Activated CD8-positive, alpha-beta T cell treated with anti-CD3 and anti-CD28 coated beads, Interleukin-2, amount 10 ng/mL, durations not matched to agents 7 days and 5 days (primary cell): ENCODE measurements at regions of chr11 and their contacts with region 1.

Region 1: GRCh38 chr11:35138943-35139721 is at the start of gene CD44:
- DNase-seq: peak; percentile 80
- ATAC-seq: peak; percentile 69
- H3K4me3 Mint-ChIP-seq: peak within 1 kb of the TSS; percentile 88
- H3K27ac Mint-ChIP-seq: peak within 1 kb of the TSS; percentile 92
- H3K4me1 Mint-ChIP-seq: peaks cover 47% of the 10 kb centered on the region
- H3K27me3 Mint-ChIP-seq: no peaks in the 10 kb centered on the region
- total RNA-seq, gene CD44: 398 to 399 TPM

Region 2: GRCh38 chr11:35040221-35040942 is 98.8 kb before region 1 on chr11:
- CTCF ChIA-PET with region 1: interaction called, 7 read pairs
- POLR2A ChIA-PET with region 1: interaction called, 14 read pairs
- DNase-seq: peak; percentile 70
- ATAC-seq: peak; percentile 87
- H3K4me3 Mint-ChIP-seq: peak overlapping the region; percentile 62
- H3K27ac Mint-ChIP-seq: peak overlapping the region; percentile 86
- H3K4me1 Mint-ChIP-seq: peaks cover 50% of the 10 kb centered on the region
- H3K27me3 Mint-ChIP-seq: peaks cover 2% of the 10 kb centered on the region

Region 3: GRCh38 chr11:35082321-35083182 is 56.6 kb before region 1 on chr11:
- CTCF ChIA-PET with region 1: interaction called, 5 read pairs
- POLR2A ChIA-PET with region 1: interaction called, 21 read pairs
- DNase-seq: peak; percentile 94
- ATAC-seq: peak; percentile 82
- H3K4me3 Mint-ChIP-seq: peak overlapping the region; percentile 71
- H3K27ac Mint-ChIP-seq: peak overlapping the region; percentile 87
- H3K4me1 Mint-ChIP-seq: peaks cover 88% of the 10 kb centered on the region
- H3K27me3 Mint-ChIP-seq: peaks cover 2% of the 10 kb centered on the region

Region 4: GRCh38 chr11:35158701-35159510 is 19.8 kb after region 1 on chr11:
- CTCF ChIA-PET with region 1: interaction called, 218 read pairs
- POLR2A ChIA-PET with region 1: interaction called, 10 read pairs
- DNase-seq: no peak
- ATAC-seq: no peak
- H3K4me3 Mint-ChIP-seq: peak overlapping the region; percentile 12
- H3K27ac Mint-ChIP-seq: peak overlapping the region; percentile 58
- H3K4me1 Mint-ChIP-seq: peaks cover 99% of the 10 kb centered on the region
- H3K27me3 Mint-ChIP-seq: no peaks in the 10 kb centered on the region

Region 5: DNA sequence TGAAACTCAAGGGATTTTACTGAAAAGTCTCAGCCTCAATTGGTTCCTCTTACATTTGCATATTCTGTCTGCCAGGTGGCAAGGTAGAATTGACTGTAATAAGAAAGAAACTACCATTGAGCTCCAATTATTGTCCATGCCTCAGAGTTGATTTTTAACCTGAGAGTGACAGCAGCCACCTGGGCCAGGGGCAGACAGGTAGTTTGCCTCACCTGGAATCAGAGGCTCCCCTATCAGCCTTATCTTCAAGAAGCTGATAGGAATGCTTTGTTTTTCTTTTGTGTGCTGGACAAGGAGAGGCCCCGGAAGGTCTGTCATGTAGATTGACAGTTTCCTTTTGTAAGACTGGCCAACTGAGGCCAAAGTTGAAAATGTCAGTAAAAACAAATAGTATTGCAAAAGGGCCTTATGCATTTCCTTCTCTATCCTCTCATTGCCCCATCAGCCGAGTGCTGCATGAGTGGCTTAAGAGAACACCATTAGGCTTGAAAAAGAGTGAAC is 33.9 kb after region 1 on chr11:
- CTCF ChIA-PET with region 1: interaction called, 218 read pairs
- POLR2A ChIA-PET with region 1: interaction called, 47 read pairs
- DNase-seq: no peak
- ATAC-seq: no peak
- H3K4me3 Mint-ChIP-seq: peak overlapping the region; percentile 62
- H3K27ac Mint-ChIP-seq: peak overlapping the region; percentile 87
- H3K4me1 Mint-ChIP-seq: peaks cover 96% of the 10 kb centered on the region
- H3K27me3 Mint-ChIP-seq: no peaks in the 10 kb centered on the region

Region 6: DNA sequence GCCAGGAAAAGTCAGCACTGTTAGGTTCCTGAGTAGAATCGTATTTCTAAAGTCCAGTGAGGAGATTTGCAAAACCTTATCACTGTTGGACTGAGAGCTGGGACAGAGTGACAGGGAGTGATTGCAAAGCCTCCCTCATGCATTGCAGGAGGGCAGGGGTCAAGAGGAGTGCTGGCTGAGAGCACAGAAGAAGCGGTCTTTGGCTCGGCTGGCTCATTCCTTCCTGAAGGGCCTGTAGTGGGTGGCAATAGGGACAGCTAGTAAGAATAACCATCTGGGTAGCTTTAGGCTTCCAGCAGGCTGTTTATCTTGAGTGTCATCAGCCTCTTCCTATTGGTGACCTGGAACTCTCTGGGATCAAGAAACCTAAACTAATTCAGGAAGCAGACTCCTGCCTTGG is 53.2 kb after region 1 on chr11:
- CTCF ChIA-PET with region 1: no interaction called
- POLR2A ChIA-PET with region 1: no interaction called
- DNase-seq: no peak
- ATAC-seq: peak; percentile 25
- H3K4me3 Mint-ChIP-seq: no peak overlapping the region
- H3K27ac Mint-ChIP-seq: no peak overlapping the region
- H3K4me1 Mint-ChIP-seq: peaks cover 39% of the 10 kb centered on the region
- H3K27me3 Mint-ChIP-seq: no peaks in the 10 kb centered on the region

Region 7: DNA sequence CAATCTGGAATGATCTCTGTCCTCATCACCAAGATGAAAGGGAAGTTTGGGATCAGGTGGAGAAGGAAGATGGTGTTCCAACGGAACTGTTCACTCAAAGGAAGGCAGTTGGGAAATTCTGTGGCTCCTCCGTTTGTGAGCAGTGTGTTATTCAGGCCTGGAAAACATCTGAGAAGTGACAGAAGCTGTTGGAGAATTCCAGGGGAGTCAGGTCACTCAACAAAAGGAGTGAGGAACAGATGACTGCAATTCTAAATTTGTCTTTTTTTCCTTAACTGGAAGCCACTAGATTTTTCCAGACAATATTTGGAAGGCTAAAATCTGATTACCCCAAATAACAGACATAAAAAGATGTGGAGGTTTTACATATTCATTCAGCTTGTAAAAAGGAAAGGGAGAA is 107.6 kb after region 1 on chr11:
- CTCF ChIA-PET with region 1: interaction called, 11 read pairs
- POLR2A ChIA-PET with region 1: no interaction called
- DNase-seq: no peak
- ATAC-seq: no peak
- H3K4me3 Mint-ChIP-seq: no peak overlapping the region
- H3K27ac Mint-ChIP-seq: peak overlapping the region; percentile 28
- H3K4me1 Mint-ChIP-seq: peaks cover 65% of the 10 kb centered on the region
- H3K27me3 Mint-ChIP-seq: no peaks in the 10 kb centered on the region